ENCODE measurements at regions of chr12 and their contacts with region 1.

Region 1: DNA sequence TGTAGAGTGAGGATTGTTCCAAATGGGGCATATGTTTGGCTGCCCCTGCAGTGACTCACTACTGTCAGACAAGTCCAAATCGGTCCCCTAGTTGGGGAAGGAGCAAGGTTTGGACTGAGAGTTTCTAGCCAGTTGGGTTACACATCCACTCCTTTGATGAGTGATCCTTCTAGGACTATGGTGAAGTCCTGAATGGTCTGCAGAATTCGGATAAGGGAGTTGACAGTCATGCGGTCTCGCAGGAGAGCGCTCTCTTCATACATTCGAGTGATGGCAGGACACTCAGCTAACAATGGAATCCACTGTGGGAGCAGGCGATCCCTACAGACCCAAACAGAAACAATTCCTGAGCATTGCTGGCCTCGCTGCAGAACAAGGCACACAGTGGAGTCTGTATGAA is 61.5 kb upstream of the SINHCAF start:
- DNase-seq: no peak
- ATAC-seq: peak; percentile 7
- H3K4me3 Mint-ChIP-seq: peak overlapping the region; percentile 69
- H3K27ac Mint-ChIP-seq: peak overlapping the region; percentile 99
- H3K4me1 Mint-ChIP-seq: peaks cover 79% of the 10 kb centered on the region
- H3K27me3 Mint-ChIP-seq: no peaks in the 10 kb centered on the region
- CTCF ChIP-seq: no peak

Region 2: GRCh38 chr12:31245822-31246469 is 141.5 kb before region 1 on chr12:
- CTCF ChIA-PET with region 1: no interaction called
- POLR2A ChIA-PET with region 1: no interaction called
- DNase-seq: no peak
- ATAC-seq: peak; percentile 88
- H3K4me3 Mint-ChIP-seq: no peak overlapping the region
- H3K27ac Mint-ChIP-seq: peak overlapping the region; percentile 25; the same call in 1 of the 2 replicates
- H3K4me1 Mint-ChIP-seq: peaks cover 12% of the 10 kb centered on the region
- H3K27me3 Mint-ChIP-seq: no peaks in the 10 kb centered on the region
- CTCF ChIP-seq: no peak

Region 3: GRCh38 chr12:31362759-31363415 is 24.6 kb before region 1 on chr12:
- CTCF ChIA-PET with region 1: interaction called, 3 read pairs
- POLR2A ChIA-PET with region 1: interaction called, 25 read pairs
- DNase-seq: peak; percentile 47
- ATAC-seq: peak; percentile 70
- H3K4me3 Mint-ChIP-seq: peak overlapping the region; percentile 29
- H3K27ac Mint-ChIP-seq: peak overlapping the region; percentile 98
- H3K4me1 Mint-ChIP-seq: peaks cover 42% of the 10 kb centered on the region
- H3K27me3 Mint-ChIP-seq: no peaks in the 10 kb centered on the region
- CTCF ChIP-seq: no peak

Region 4: GRCh38 chr12:31369712-31370521 is 17.5 kb before region 1 on chr12:
- CTCF ChIA-PET with region 1: interaction called, 10 read pairs
- POLR2A ChIA-PET with region 1: interaction called, 71 read pairs
- DNase-seq: peak; percentile 29
- ATAC-seq: peak; percentile 12
- H3K4me3 Mint-ChIP-seq: peak overlapping the region; percentile 70
- H3K27ac Mint-ChIP-seq: peak overlapping the region; percentile 100
- H3K4me1 Mint-ChIP-seq: peaks cover 46% of the 10 kb centered on the region
- H3K27me3 Mint-ChIP-seq: no peaks in the 10 kb centered on the region
- CTCF ChIP-seq: no peak

Region 5: DNA sequence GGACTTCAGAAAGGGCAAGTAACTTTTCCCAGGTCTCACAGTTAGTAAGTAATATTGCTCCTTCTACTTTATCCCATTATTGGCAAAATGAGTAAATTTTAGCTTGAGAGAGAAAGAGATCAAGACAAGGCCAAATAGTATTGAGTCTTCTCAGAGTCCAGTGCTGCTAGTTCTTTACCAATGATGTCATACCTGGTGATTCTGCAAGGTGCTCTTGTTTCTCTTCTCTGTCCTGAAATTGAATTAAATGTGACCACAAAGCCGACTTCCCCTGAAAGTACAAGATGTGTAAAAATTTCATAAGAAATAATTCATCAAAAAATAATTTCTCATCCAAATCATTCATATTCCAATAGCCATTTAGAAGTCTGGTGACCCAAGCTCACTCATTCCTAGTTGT is 35.9 kb after region 1 on chr12:
- CTCF ChIA-PET with region 1: no interaction called
- POLR2A ChIA-PET with region 1: no interaction called
- DNase-seq: no peak
- ATAC-seq: no peak
- H3K4me3 Mint-ChIP-seq: no peak overlapping the region
- H3K27ac Mint-ChIP-seq: no peak overlapping the region
- H3K4me1 Mint-ChIP-seq: no peaks in the 10 kb centered on the region
- H3K27me3 Mint-ChIP-seq: no peaks in the 10 kb centered on the region
- CTCF ChIP-seq: no peak

Region 6: DNA sequence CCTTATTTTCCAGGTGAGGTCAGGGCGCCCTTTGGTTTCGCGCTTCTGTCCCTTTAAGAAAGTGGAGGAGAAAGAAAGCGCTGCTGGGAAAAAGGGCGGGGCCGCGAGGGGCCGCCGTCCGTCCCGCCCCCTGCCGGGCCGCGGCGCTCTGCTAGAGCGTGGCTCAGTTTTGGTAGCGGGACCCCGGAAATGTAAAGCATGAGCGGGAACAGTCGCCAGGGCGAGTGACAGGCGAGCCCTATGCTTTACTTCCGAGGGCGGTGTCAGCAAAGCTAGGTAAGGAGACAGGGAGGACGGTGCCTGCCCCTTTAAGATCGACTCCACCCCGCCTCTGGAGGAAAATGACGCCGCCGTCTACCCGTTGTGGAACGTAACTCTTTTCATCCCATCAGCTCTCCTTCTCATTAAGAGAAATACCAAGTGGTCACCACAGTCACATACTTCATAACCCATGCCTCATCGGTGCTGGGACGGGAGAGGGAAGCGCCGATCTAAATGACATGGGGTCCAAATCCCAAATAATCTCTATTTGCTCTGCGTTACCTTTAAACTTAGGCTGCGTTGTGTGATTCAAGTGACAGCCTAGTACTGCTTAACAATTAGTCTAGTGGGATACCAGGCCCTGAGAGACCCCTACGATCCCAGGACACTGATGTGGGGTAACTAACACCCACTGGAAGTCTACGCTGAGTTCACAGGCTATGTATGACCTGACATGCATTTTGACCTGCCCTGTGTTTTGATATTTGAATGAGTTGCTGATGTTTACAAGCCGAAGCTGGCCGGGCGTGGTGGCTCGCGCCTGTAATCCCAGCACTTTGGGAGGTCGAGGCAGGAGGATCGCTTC is 271.8 kb after region 1 on chr12 and contains the start of gene ETFBKMT:
- CTCF ChIA-PET with region 1: no interaction called
- POLR2A ChIA-PET with region 1: no interaction called
- DNase-seq: peak; percentile 84
- ATAC-seq: peak; percentile 98
- H3K4me3 Mint-ChIP-seq: peak within 1 kb of the TSS; percentile 96
- H3K27ac Mint-ChIP-seq: peak within 1 kb of the TSS; percentile 98
- H3K4me1 Mint-ChIP-seq: peaks cover 8% of the 10 kb centered on the region; the same call in 1 of the 2 replicates
- H3K27me3 Mint-ChIP-seq: no peaks in the 10 kb centered on the region
- CTCF ChIP-seq: no peak
- total RNA-seq, gene ETFBKMT: 2.0 to 2.2 TPM (median 2.1 TPM) in 3 replicates